Breast epithelium (tissue), 4 donors: ENCODE measurements at regions of chr4 and their contacts with region 1.

Region 1: GRCh38 chr4:120801137-120801758 is 121.3 kb downstream of the PRDM5 start:
- DNase-seq: no peak
- H3K4me3 ChIP-seq: no peak overlapping the region
- H3K27ac ChIP-seq: no peak overlapping the region
- H3K4me1 ChIP-seq: no peaks in the 10 kb centered on the region
- H3K27me3 ChIP-seq: no peaks in the 10 kb centered on the region
- CTCF ChIP-seq: no peak
- POLR2A ChIP-seq: no peak

Region 2: DNA sequence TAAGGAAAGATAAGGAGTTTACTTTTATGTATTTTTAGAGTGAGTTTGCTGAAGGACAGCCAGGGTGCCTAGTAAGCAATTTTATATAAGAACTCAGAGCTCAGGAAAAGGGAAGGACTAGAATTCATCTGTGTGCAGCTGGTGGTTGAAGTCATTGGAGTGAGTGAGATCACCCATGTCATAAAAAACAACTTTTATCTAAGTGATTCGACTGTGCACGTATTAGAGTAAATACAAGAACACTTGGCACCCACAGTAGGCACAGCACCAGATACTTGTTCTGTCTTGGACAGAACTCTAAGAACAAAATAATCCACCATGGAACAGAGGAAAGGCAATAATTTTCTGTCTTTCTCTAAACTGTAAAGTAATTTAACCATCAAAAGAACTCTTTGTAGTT is 1881.0 kb before region 1 on chr4:
- intact Hi-C with region 1: loop called (anchors 10 kb)
- DNase-seq: no peak
- H3K4me3 ChIP-seq: no peak overlapping the region
- H3K27ac ChIP-seq: peak overlapping the region; percentile 0 to 75
- H3K4me1 ChIP-seq: no peaks in the 10 kb centered on the region
- H3K27me3 ChIP-seq: no peaks in the 10 kb centered on the region
- CTCF ChIP-seq: no peak
- POLR2A ChIP-seq: no peak

Region 3: GRCh38 chr4:120293341-120293740 is 507.9 kb before region 1 on chr4:
- intact Hi-C with region 1: loop called (anchors 5 kb)
- DNase-seq: no peak
- H3K4me3 ChIP-seq: no peak overlapping the region
- H3K27ac ChIP-seq: no peak overlapping the region
- H3K4me1 ChIP-seq: no peaks in the 10 kb centered on the region
- H3K27me3 ChIP-seq: no peaks in the 10 kb centered on the region
- CTCF ChIP-seq: no peak
- POLR2A ChIP-seq: no peak